Activated B cell treated with CpG ODN at 0.5 μM for 24 hours (primary cell): ENCODE measurements at regions of chr6 and their contacts with region 1.

Region 1: DNA sequence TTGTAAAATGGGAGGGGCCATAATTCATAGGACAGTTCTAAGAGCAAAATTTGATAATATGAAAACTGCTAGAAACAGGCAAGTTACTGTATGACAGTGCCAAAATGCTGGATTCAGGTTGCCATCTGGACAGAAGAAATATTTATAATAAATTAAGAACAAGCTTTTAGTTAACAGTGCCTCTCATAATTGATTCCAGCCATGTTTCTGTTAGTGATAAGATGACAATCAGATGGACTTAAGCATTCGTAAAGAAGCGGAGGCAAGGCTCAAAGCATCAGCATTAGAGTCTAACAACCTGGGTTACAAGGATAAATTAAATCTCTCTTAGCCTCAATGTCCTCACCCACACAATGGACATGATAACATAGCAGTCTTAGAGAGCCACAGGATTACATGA is 61.0 kb downstream of the SESN1 start:
- DNase-seq: no peak
- ATAC-seq: no peak
- H3K4me3 Mint-ChIP-seq: no peak overlapping the region
- H3K27ac Mint-ChIP-seq: no peak overlapping the region
- H3K4me1 Mint-ChIP-seq: peaks cover 21% of the 10 kb centered on the region
- H3K27me3 Mint-ChIP-seq: no peaks in the 10 kb centered on the region
- CTCF ChIP-seq: no peak

Region 2: DNA sequence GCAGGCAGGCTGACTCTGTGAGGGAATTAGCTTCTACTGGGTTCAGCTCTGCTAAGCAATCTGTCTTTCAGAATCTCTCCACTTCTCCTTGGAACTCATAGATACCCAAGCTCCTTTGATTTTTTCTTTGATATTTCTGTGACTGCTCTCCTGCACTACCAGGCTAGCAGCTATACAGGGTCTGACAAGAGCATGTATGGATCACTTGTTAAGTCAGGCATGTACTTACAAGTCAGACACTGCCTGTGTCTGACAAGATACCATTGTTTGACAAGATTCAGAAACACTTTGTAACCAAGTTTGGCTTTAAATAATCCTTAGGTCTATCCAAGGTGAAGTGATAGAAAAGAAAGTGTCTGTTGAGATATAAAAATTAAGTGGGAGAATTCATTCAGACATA is 18.5 kb before region 1 on chr6:
- CTCF ChIA-PET with region 1: interaction called, 3 read pairs
- POLR2A ChIA-PET with region 1: interaction called, 5 read pairs
- intact Hi-C with region 1: loop called (anchors 2 kb)
- DNase-seq: no peak
- ATAC-seq: no peak
- H3K4me3 Mint-ChIP-seq: no peak overlapping the region
- H3K27ac Mint-ChIP-seq: peak overlapping the region; percentile 42
- H3K4me1 Mint-ChIP-seq: peaks cover 50% of the 10 kb centered on the region
- H3K27me3 Mint-ChIP-seq: no peaks in the 10 kb centered on the region
- CTCF ChIP-seq: no peak